Vagina (tissue), 2 donors: ENCODE measurements at regions of chr6 and their contacts with region 1.

Region 1: DNA sequence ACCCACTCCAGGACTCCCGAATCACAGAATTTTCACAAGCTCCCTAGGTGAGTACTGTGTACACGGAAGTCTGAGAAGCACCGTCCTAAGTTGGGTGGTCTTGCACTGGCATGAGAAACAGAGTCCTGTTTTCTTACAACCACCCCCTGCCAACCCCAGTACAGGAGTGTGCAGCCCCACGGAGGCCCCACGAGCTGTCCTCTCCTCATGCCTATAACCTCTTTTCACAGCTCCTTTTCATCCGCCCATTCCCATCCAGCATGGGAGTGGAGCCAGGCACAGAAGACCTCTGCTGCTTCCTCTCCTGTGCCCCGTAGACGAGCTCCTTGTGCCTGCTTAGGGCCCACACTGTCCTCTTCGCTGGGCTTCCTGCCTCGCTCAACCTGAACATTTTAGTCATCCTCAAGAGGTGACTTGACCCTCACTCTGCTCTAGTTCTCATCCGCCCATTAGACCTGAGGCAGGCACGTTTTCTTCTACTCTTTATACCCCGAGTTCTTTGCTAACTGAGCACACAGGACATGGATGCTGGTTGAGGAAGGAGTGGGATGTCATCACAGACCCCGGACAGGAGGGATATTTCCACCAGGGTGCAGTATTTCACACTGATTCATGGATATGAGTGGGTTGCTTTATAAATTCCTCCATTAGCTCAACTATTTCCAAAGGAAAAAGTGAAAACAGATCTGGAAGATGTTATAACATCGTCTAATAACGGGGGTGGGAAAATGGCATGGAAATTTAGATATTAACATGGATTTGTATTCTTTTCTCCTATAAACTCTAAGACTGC is 160.5 kb downstream of the TTLL2 start:
- DNase-seq: no peak
- H3K4me3 ChIP-seq: no peak overlapping the region
- H3K27ac ChIP-seq: no peak overlapping the region
- H3K4me1 ChIP-seq: no peaks in the 10 kb centered on the region
- H3K27me3 ChIP-seq: no peaks in the 10 kb centered on the region
- CTCF ChIP-seq: peak in 1 of 3 experiments; percentile 49
- POLR2A ChIP-seq: no peak

Region 2: DNA sequence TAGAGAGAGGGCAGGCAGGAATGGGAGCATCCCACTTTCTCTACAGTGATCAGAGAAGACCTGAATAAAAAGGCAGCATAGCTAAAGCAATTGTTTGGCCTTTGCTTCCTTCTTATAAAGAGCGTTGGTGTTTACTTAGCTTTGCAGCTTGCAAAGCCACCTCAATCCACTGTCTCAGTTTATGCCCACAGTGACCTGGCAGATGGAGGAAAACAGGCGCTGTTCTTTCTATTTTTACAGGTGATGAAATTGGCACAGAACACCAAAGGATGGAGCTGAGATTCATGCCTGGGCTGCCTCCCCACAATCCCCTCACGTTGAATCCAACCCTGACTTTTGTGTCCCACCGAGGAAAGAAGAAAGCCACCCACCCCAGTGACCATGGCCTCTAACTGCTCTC is 30.0 kb before region 1 on chr6:
- intact Hi-C with region 1: no loop called
- DNase-seq: no peak
- H3K4me3 ChIP-seq: no peak overlapping the region
- H3K27ac ChIP-seq: no peak overlapping the region
- H3K4me1 ChIP-seq: no peaks in the 10 kb centered on the region
- H3K27me3 ChIP-seq: no peaks in the 10 kb centered on the region
- CTCF ChIP-seq: no peak
- POLR2A ChIP-seq: no peak

Region 3: DNA sequence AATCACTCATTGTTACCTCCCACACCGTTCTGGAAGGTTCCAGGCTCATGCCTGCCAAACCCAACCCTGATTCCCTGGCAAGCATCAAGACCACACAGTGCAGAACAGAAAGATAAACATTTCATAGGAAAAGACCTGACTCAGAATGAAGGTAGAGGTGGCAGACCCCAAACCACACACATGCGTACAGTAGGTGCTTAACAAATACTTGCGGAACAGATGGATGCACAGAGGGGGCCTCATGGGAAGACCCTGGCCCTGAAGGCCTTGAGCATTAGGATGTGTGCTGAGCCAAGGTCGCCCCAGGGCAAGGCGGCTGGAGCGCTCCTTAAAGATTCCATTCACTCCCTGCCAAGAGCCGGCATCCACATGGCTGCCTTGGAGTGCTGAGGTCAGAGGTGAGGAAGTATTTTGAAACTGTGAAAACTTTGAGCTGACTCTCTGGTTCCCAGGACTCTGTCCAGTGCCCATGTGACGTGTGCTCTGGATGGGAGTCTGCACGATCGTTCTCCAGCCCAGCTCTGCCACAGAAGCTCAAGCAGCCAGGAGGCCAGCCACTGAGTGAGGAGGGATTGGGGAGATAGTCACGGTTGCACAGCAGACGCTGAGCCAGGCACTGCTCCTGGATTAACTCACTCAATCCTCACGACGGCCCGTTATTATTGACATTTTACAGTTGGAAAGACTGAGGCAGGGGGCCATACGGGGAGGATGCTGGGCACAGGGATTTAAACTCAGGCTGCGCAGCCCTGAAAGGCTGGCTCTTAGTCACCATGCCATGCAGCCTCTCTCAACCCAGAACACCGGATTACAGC is 275.8 kb after region 1 on chr6:
- intact Hi-C with region 1: no loop called
- DNase-seq: no peak
- H3K4me3 ChIP-seq: no peak overlapping the region
- H3K27ac ChIP-seq: no peak overlapping the region
- H3K4me1 ChIP-seq: no peaks in the 10 kb centered on the region
- H3K27me3 ChIP-seq: no peaks in the 10 kb centered on the region
- CTCF ChIP-seq: no peak
- POLR2A ChIP-seq: no peak

Region 4: GRCh38 chr6:167898673-167899311 is 413.4 kb after region 1 on chr6:
- intact Hi-C with region 1: loop called (anchors 10 kb)
- DNase-seq: no peak
- H3K4me3 ChIP-seq: no peak overlapping the region
- H3K27ac ChIP-seq: no peak overlapping the region
- H3K4me1 ChIP-seq: no peaks in the 10 kb centered on the region
- H3K27me3 ChIP-seq: no peaks in the 10 kb centered on the region
- CTCF ChIP-seq: peak in 2 of 3 experiments; percentile 60 to 72
- POLR2A ChIP-seq: no peak